ENCODE measurements at regions of chr11 and their contacts with region 1.

Region 1: DNA sequence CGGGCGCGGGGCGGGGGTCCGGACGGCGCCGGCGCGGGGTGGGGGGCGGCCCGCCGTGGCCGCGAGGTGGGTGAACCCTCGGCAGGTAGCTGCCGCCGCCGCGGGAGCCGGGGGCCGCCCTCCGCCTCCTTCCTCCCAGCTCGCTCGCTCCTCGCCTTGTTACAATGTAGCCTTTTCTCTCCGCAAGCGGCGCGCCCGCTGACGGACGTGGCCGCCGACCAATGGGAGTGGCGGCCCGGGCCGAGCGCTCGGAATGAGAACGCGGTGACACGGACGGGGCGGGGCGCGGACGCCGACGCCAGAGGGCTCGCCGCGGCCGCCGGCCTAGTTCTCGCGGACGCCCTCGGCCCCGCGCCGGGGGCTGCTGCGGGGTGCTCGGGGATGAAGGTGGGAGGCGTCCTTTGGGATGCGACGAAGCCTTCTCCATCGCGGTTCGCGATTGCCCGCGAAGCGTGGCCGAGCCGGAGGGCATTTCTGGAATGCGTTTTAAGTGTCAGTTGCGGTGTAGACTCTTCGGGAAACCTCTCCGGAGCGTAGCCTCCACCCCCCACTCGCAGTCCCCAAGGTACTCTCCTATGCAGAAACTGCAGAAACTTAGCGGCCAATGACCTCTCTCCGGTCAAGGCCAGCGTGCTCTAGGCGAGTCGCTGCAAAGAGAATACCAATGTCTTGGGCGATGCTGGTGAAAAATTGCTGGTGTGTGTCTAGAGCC is 734 bp downstream of the PRDM11 start:
- DNase-seq: peak; percentile 92
- H3K4me3 Mint-ChIP-seq: peak overlapping the region; percentile 84
- H3K27ac Mint-ChIP-seq: peak overlapping the region; percentile 22
- H3K4me1 Mint-ChIP-seq: peaks cover 14% of the 10 kb centered on the region
- H3K27me3 Mint-ChIP-seq: peaks cover 9% of the 10 kb centered on the region

Region 2: GRCh38 chr11:44950625-44951476 is 196.3 kb before region 1 on chr11 and contains the start of gene TP53I11:
- CTCF ChIA-PET with region 1: no interaction called
- intact Hi-C with region 1: loop called (anchors 2 kb)
- DNase-seq: peak; percentile 71
- H3K4me3 Mint-ChIP-seq: peak within 1 kb of the TSS; percentile 73
- H3K27ac Mint-ChIP-seq: no peak within 1 kb of the TSS
- H3K4me1 Mint-ChIP-seq: peaks cover 8% of the 10 kb centered on the region
- H3K27me3 Mint-ChIP-seq: peaks cover 2% of the 10 kb centered on the region
- total RNA-seq, gene TP53I11: 10.3 to 14.0 TPM

Region 3: GRCh38 chr11:45180179-45180842 is 33.1 kb after region 1 on chr11:
- CTCF ChIA-PET with region 1: no interaction called
- intact Hi-C with region 1: loop called (anchors 5 kb)
- DNase-seq: peak; percentile 38
- H3K4me3 Mint-ChIP-seq: peak overlapping the region; percentile 66
- H3K27ac Mint-ChIP-seq: no peak overlapping the region
- H3K4me1 Mint-ChIP-seq: peaks cover 7% of the 10 kb centered on the region
- H3K27me3 Mint-ChIP-seq: peaks cover 21% of the 10 kb centered on the region

Region 4: DNA sequence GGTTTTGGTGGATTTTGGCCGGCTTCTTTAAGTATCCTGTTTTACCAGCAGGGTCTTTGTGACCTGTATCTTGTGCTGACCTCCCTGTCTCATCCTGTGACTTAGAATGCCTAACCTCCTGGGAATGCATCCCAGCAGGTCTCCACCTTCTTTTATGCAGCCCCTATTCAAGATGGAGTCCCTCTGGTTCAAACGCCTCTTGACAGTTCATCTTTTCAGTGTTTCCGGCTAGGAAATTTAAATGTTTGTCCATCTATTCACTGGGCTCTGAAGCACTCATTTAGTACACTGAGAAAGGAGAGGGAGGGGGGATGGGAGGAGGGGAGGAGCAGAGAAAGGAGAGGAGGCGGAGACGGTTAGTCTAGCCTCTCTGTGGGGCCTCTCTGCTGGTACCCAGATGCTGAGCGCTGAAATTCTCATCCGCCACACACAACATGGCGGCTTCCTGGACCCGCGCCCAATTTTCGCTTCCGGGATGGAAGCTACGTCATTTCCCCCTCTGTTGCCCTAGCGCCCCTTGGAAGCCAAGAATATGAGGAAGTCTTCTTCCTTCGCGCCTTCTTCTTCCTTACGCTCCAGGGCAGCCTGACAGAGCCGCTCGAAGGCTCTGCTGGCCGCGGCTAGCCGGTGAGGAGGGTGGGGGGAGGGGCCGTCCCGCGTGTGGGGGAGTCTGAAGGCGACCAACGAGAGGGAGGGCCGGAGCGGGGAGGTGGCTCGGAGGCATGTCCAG is 208.0 kb after region 1 on chr11:
- CTCF ChIA-PET with region 1: no interaction called
- intact Hi-C with region 1: loop called (anchors 1 kb)
- DNase-seq: peak; percentile 92
- H3K4me3 Mint-ChIP-seq: peak overlapping the region; percentile 73
- H3K27ac Mint-ChIP-seq: peak overlapping the region; percentile 71
- H3K4me1 Mint-ChIP-seq: peaks cover 18% of the 10 kb centered on the region
- H3K27me3 Mint-ChIP-seq: no peaks in the 10 kb centered on the region

Region 5: DNA sequence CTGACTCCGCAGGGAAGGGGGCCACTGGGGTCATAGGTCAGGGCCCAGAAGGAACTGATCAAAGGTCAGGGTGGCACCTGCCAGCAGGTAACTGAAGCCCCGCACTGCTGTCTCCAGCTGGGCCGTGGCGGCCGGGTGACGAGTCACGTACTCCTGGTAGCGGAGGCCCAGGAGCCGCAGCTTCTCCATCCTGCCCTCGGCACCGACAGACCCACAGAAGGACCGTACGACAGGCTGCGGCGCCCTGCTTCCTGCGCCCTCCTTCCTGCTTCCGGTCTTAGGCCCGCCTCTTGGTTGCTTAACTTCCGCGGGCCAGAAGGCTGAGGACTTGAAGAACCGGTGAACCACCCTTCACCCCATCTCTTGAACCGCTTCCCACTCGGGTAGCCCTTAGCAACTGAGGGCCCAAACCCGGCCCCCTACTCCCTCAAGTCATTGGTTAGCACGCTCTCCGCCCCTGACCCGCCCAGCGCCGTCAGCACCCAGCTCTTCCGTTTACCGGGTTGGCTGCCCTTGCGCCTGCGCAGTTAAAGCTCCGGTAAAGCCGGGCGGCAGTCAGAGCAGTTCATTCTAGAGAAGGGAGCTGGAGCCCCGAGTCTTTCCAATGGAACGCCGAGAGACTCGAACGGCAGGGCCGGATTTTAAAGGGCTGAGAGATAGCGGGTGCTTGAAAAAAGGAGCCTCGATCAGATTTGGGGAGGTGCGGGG is 770.6 kb after region 1 on chr11 and contains the start of gene PEX16:
- CTCF ChIA-PET with region 1: no interaction called
- intact Hi-C with region 1: loop called (anchors 5 kb)
- DNase-seq: peak; percentile 96
- H3K4me3 Mint-ChIP-seq: peak within 1 kb of the TSS; percentile 88
- H3K27ac Mint-ChIP-seq: peak within 1 kb of the TSS; percentile 96
- H3K4me1 Mint-ChIP-seq: peaks cover 24% of the 10 kb centered on the region
- H3K27me3 Mint-ChIP-seq: peaks cover 3% of the 10 kb centered on the region
- total RNA-seq, gene PEX16: 28.6 to 32.5 TPM

Measured in activated naive CD4-positive, alpha-beta T cell treated with anti-CD3 and anti-CD28 coated beads for 36 hours (primary cell).